Vagina (tissue), 2 donors: ENCODE measurements at regions of chr11 and their contacts with region 1.

Region 1: DNA sequence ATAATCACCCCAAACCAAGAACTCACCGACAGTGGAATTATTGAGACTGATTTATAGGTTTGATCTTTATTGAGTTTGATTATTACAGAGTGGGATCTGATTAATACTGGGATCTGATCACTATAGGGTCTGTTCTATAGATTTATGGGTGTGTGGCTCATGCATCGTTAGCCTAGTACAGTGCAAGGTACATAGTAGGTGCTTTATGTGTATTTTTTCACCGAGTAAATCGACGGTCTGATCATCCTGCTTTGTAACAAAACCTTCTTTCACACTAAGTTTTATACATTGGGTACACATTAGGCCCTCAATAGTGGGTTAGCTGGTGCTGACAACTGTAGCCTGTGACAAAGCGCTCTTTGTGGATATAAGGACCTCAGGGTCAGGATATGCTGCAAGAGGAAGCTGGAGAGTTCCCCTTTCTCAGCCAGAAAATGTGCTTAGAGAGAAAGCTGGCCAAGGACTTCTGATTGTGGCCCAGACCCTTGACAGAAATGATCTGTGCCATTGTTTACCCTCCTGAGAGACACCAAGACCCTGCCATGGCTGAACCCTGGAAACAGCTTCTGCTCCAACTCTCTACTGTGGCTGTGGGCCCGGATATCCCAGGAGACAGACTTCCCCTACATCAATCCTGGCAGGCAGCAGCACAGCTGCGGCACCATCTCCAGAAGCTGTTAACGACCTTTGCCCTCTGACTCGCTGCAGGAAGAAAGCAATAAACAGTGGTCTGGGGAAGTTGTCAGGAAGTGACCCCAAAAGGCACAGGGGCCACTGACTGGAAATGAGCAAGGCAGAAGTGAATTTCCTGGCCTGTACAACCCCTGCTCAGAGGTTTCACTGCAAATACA is 16.1 kb upstream of the TPP1 start:
- DNase-seq: no peak
- H3K4me3 ChIP-seq: no peak overlapping the region
- H3K27ac ChIP-seq: peak overlapping the region; percentile 50
- H3K4me1 ChIP-seq: peaks cover 46% of the 10 kb centered on the region
- H3K27me3 ChIP-seq: no peaks in the 10 kb centered on the region
- CTCF ChIP-seq: no peak
- POLR2A ChIP-seq: no peak

Region 2: GRCh38 chr11:5188201-5188600 is 1447.1 kb before region 1 on chr11:
- intact Hi-C with region 1: loop called (anchors 5 kb)
- DNase-seq: no peak
- H3K4me3 ChIP-seq: no peak overlapping the region
- H3K27ac ChIP-seq: no peak overlapping the region
- H3K4me1 ChIP-seq: no peaks in the 10 kb centered on the region
- H3K27me3 ChIP-seq: no peaks in the 10 kb centered on the region
- CTCF ChIP-seq: no peak
- POLR2A ChIP-seq: no peak